ENCODE measurements at regions of chr3 and their contacts with region 1.

Region 1: GRCh38 chr3:25962249-25962648 is 172.4 kb downstream of the OXSM start:
- DNase-seq: no peak
- H3K4me3 ChIP-seq: no peak overlapping the region
- H3K27ac ChIP-seq: no peak overlapping the region
- H3K4me1 ChIP-seq: no peaks in the 10 kb centered on the region
- H3K27me3 ChIP-seq: no peaks in the 10 kb centered on the region
- CTCF ChIP-seq: peak in 1 of 3 donors; percentile 15
- POLR2A ChIP-seq: no peak

Region 2: DNA sequence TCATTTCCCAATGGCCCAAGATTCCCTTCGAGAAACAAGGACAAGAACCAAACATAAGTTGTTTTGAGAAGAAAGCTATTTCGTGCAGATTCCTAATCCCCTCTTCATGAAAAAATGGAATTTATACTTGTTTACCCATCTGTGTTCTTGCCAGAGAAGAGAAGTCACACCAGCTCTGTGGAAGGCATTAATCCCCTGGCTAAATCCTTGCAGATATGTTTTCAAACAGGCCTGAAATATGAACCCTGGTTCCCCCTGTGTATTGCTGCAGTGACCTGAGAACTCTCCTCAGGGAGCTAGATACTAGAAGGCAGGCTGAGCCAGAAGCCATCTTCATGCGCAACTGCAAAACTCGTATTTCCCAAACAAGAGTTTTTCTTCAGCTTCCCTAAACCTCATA is 1069.2 kb after region 1 on chr3:
- intact Hi-C with region 1: loop called (anchors 10 kb)
- DNase-seq: no peak
- H3K4me3 ChIP-seq: no peak overlapping the region
- H3K27ac ChIP-seq: no peak overlapping the region
- H3K4me1 ChIP-seq: no peaks in the 10 kb centered on the region
- H3K27me3 ChIP-seq: no peaks in the 10 kb centered on the region
- CTCF ChIP-seq: no peak
- POLR2A ChIP-seq: no peak

Region 3: GRCh38 chr3:27503526-27503925 is 1541.3 kb after region 1 on chr3:
- intact Hi-C with region 1: no loop called
- DNase-seq: no peak
- H3K4me3 ChIP-seq: no peak overlapping the region
- H3K27ac ChIP-seq: no peak overlapping the region
- H3K4me1 ChIP-seq: no peaks in the 10 kb centered on the region
- H3K27me3 ChIP-seq: no peaks in the 10 kb centered on the region
- CTCF ChIP-seq: no peak
- POLR2A ChIP-seq: no peak